B cell (primary cell): ENCODE measurements at regions of chr14 and their contacts with region 1.

Region 1: DNA sequence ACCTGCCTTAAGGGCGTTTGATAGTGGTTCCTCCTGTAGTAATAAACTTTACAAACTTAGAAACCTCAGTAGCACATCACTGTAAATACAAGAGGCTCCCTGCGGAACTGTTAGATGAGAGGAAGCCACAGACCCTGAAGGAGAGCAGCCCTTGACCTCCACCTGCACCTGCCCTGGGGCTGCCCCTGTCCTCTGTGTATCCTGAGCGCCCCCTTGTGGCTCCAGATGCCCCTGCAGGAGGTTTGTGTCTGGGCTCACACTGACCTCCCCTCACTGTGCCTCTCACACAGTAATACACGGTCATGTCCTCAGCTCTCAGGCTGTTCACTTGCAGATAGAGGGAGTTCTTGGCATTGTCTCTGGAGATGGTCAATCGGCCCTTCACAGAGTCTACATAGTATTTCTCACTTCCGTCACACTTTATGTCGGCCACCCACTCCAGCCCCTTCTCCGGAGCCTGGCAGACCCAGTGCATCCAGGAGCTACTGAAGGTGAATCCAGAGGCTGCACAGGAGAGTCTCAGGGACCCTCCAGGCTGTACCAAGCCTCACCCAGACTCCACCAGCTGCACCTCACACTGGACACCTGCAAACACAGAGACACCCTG is 1059.8 kb downstream of the TMEM121 start:
- DNase-seq: peak; percentile 80
- ATAC-seq: peak; percentile 98
- H3K4me3 ChIP-seq: no peak overlapping the region
- H3K4me3 Mint-ChIP-seq: no peak overlapping the region
- H3K27ac ChIP-seq: no peak overlapping the region
- H3K27ac Mint-ChIP-seq: peak overlapping the region; percentile 59
- H3K4me1 ChIP-seq: peaks cover 22 to 31% of the 10 kb centered on the region in 2 donors
- H3K4me1 Mint-ChIP-seq: peaks cover 36% of the 10 kb centered on the region
- H3K27me3 ChIP-seq: no peaks in the 10 kb centered on the region
- H3K27me3 Mint-ChIP-seq: peaks cover 3% of the 10 kb centered on the region
- CTCF ChIP-seq: peak; percentile 89

Region 2: GRCh38 chr14:105640936-105641843 is 945.0 kb before region 1 on chr14:
- CTCF ChIA-PET with region 1: no interaction called
- POLR2A ChIA-PET with region 1: interaction called, 11 read pairs
- intact Hi-C with region 1: no loop called
- DNase-seq: no peak
- ATAC-seq: no peak
- H3K4me3 ChIP-seq: no peak overlapping the region
- H3K4me3 Mint-ChIP-seq: no peak overlapping the region
- H3K27ac ChIP-seq: no peak overlapping the region
- H3K27ac Mint-ChIP-seq: peak overlapping the region; percentile 74
- H3K4me1 ChIP-seq: peaks cover 0 to 11% of the 10 kb centered on the region in 2 donors
- H3K4me1 Mint-ChIP-seq: peaks cover 14% of the 10 kb centered on the region
- H3K27me3 ChIP-seq: no peaks in the 10 kb centered on the region
- H3K27me3 Mint-ChIP-seq: no peaks in the 10 kb centered on the region
- CTCF ChIP-seq: no peak

Region 3: GRCh38 chr14:106442857-106443256 is 143.3 kb before region 1 on chr14:
- CTCF ChIA-PET with region 1: no interaction called
- POLR2A ChIA-PET with region 1: no interaction called
- intact Hi-C with region 1: no loop called
- DNase-seq: peak; percentile 50
- ATAC-seq: peak; percentile 85
- H3K4me3 ChIP-seq: no peak overlapping the region
- H3K4me3 Mint-ChIP-seq: no peak overlapping the region
- H3K27ac ChIP-seq: no peak overlapping the region
- H3K27ac Mint-ChIP-seq: peak overlapping the region; percentile 33
- H3K4me1 ChIP-seq: peaks cover 0 to 3% of the 10 kb centered on the region in 2 donors
- H3K4me1 Mint-ChIP-seq: peaks cover 8% of the 10 kb centered on the region
- H3K27me3 ChIP-seq: peaks cover 0 to 5% (median 0%) of the 10 kb centered on the region in 4 experiments
- H3K27me3 Mint-ChIP-seq: peaks cover 33% of the 10 kb centered on the region
- CTCF ChIP-seq: peak; percentile 68

Region 4: DNA sequence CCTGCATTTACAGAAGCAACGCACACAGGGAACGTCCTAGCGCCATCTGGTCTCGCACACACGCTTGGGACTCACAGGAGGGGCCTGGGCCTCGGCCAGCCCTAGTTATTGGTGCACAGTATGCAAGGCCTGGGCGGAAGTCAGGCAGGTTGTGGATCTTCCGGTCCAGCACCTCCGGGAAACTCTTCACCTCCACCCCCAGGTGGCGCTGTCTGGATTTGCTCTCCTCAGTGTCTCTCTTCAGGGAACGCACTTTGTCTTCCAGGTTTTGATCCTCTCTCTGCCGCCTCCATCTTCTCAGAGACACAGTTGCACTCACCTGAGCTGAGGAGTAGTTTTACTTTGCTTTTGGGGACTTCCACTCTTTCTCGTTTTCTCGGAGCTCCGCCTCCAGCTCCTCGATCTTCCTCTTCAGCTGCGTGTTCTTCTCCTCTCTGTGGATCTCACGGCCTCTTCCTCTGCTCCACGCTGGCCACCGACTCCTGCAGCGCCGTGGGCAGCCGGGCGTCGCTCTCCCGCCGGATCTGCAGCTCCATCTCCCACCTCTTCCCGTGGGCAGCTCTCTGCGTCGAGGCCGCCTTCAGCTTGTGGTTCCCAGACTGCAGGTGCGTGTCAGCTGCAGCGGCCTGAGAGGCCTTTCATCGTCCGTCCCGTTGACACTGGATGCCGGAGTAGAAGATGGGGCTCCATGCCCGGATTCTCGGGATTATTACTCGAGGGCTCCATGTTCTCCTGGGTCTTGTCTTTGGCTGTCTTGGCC is 126.0 kb before region 1 on chr14:
- CTCF ChIA-PET with region 1: no interaction called
- POLR2A ChIA-PET with region 1: no interaction called
- intact Hi-C with region 1: loop called (anchors 10 kb)
- DNase-seq: peak; percentile 47
- ATAC-seq: peak; percentile 49
- H3K4me3 ChIP-seq: no peak overlapping the region
- H3K4me3 Mint-ChIP-seq: no peak overlapping the region
- H3K27ac ChIP-seq: no peak overlapping the region
- H3K27ac Mint-ChIP-seq: no peak overlapping the region
- H3K4me1 ChIP-seq: no peaks in the 10 kb centered on the region
- H3K4me1 Mint-ChIP-seq: peaks cover 11% of the 10 kb centered on the region
- H3K27me3 ChIP-seq: no peaks in the 10 kb centered on the region
- H3K27me3 Mint-ChIP-seq: peaks cover 10% of the 10 kb centered on the region
- CTCF ChIP-seq: peak; percentile 77

Region 5: GRCh38 chr14:106538201-106538600 is 48.0 kb before region 1 on chr14:
- CTCF ChIA-PET with region 1: interaction called, 13 read pairs
- POLR2A ChIA-PET with region 1: no interaction called
- intact Hi-C with region 1: no loop called
- DNase-seq: peak; percentile 54
- ATAC-seq: no peak
- H3K4me3 ChIP-seq: peak overlapping the region in 1 of 5 experiments; percentile 30
- H3K4me3 Mint-ChIP-seq: peak overlapping the region; percentile 60
- H3K27ac ChIP-seq: peak overlapping the region; percentile 57 to 85
- H3K27ac Mint-ChIP-seq: peak overlapping the region; percentile 85
- H3K4me1 ChIP-seq: peaks cover 33 to 36% of the 10 kb centered on the region in 2 donors
- H3K4me1 Mint-ChIP-seq: peaks cover 43% of the 10 kb centered on the region
- H3K27me3 ChIP-seq: peaks cover 0 to 5% (median 1%) of the 10 kb centered on the region in 4 experiments
- H3K27me3 Mint-ChIP-seq: peaks cover 10% of the 10 kb centered on the region
- CTCF ChIP-seq: no peak

Region 6: DNA sequence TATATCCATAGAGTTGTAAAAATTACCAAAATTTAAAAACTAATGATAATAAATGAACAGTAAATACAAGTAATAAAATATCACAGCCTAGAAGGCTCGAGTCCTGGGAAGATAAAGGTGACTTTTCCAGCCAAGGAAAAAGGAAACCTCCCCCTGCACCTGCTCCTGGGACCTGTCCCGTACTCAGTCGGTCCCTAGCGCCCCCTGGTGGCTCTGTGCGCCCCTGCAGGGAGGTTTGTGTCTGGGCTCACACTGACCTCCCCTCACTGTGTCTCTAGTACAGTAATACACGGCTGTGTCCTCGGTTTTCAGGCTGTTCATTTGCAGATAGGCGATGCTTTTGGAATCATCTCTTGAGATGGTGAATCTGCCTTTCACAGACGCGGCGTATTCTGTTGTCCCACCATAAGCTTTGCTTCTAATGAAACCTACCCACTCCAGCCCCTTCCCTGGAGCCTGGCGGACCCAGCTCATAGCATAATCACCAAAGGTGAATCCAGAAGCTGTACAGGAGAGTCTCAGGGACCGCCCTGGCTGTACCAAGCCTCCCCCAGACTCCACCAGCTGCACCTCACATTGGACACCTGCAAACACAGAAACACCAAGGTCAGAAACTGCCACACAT is 29.4 kb before region 1 on chr14:
- CTCF ChIA-PET with region 1: interaction called, 23 read pairs
- POLR2A ChIA-PET with region 1: no interaction called
- intact Hi-C with region 1: no loop called
- DNase-seq: peak; percentile 77
- ATAC-seq: peak; percentile 75
- H3K4me3 ChIP-seq: no peak overlapping the region
- H3K4me3 Mint-ChIP-seq: no peak overlapping the region
- H3K27ac ChIP-seq: no peak overlapping the region
- H3K27ac Mint-ChIP-seq: peak overlapping the region; percentile 50
- H3K4me1 ChIP-seq: no peaks in the 10 kb centered on the region
- H3K4me1 Mint-ChIP-seq: peaks cover 2% of the 10 kb centered on the region
- H3K27me3 ChIP-seq: peaks cover 0 to 4% (median 0%) of the 10 kb centered on the region in 4 experiments
- H3K27me3 Mint-ChIP-seq: peaks cover 11% of the 10 kb centered on the region
- CTCF ChIP-seq: peak; percentile 85

Region 7: DNA sequence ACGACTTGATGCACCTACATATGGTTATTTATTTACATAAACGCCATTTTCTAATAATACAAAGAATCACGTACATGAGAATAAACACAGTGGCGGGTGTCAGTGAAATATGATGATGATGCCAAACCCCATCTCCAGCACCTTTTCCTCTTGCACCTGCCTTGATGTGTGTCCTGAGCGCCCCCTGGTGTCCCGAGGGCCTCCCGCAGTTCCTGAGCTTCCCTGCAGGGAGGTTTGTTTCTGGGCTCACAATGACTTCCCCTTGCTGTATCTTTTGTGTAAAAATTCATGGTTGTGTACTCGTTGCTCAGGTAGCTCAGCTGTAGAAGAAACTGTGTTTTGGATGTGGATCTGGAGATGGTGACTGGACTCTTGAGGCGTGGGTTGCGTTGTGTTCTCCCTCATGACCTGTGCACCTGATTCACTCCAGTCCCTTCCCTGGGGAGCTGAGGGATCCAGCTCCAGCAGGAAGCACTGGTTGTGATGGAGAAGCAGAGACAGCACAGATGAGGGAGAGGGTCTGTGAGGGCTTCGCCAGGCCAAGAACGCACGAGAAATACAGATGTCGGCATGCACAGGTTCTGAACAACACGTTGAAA is 22.0 kb before region 1 on chr14:
- CTCF ChIA-PET with region 1: interaction called, 34 read pairs
- POLR2A ChIA-PET with region 1: interaction called, 3 read pairs
- intact Hi-C with region 1: no loop called
- DNase-seq: peak; percentile 82
- ATAC-seq: peak; percentile 73
- H3K4me3 ChIP-seq: no peak overlapping the region
- H3K4me3 Mint-ChIP-seq: no peak overlapping the region
- H3K27ac ChIP-seq: no peak overlapping the region
- H3K27ac Mint-ChIP-seq: peak overlapping the region; percentile 34
- H3K4me1 ChIP-seq: no peaks in the 10 kb centered on the region
- H3K4me1 Mint-ChIP-seq: peaks cover 3% of the 10 kb centered on the region
- H3K27me3 ChIP-seq: peaks cover 0 to under 1% (median 0%) of the 10 kb centered on the region in 4 experiments
- H3K27me3 Mint-ChIP-seq: peaks cover 12% of the 10 kb centered on the region
- CTCF ChIP-seq: peak; percentile 74

Region 8: DNA sequence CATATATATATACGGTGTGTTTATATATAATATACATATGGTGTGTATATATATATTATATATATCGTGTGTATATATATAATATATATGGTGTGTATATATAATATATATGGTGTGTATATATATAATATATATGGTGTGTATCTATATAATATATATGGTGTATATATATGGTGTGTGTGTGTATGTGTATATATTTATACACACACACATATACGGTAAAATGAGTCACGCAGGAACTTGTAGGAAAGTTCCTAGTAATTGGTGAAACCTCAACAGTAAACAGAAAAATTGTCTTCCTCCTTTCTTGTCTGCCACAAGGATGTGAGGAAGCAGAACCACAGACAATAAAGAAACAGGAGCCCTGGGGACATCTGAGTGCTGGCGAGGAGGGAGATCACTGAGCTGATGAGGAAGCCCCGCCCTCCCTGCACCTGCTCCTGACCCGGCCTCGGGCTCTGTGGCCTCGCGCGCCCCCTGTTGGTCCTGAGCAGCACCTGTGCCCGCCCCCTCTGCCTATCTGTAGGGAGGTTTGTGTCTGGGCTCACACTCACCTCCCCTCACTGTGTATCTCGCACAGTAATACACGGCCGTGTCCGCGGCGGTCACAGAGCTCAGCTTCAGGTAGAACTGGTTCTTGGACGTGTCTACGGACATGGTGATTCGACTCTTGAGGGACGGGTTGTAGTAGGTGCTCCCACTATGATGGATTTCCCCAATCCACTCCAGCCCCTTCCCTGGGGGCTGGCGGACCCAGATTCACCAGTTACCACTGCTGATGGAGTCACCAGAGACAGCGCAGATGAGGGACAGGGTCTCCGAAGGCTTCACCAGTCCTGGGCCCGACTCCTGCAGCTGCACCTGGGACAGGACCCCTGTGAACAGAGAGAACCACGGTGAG is 19.6 kb after region 1 on chr14:
- CTCF ChIA-PET with region 1: interaction called, 10 read pairs
- POLR2A ChIA-PET with region 1: no interaction called
- intact Hi-C with region 1: no loop called
- DNase-seq: peak; percentile 90
- ATAC-seq: peak; percentile 99
- H3K4me3 ChIP-seq: no peak overlapping the region
- H3K4me3 Mint-ChIP-seq: no peak overlapping the region
- H3K27ac ChIP-seq: no peak overlapping the region
- H3K27ac Mint-ChIP-seq: no peak overlapping the region
- H3K4me1 ChIP-seq: peaks cover 0 to 9% of the 10 kb centered on the region in 2 donors
- H3K4me1 Mint-ChIP-seq: peaks cover 14% of the 10 kb centered on the region
- H3K27me3 ChIP-seq: peaks cover 0 to 13% (median 8%) of the 10 kb centered on the region in 4 experiments
- H3K27me3 Mint-ChIP-seq: peaks cover 65% of the 10 kb centered on the region
- CTCF ChIP-seq: peak; percentile 76

Region 9: GRCh38 chr14:106657460-106657859 is 71.3 kb after region 1 on chr14:
- CTCF ChIA-PET with region 1: no interaction called
- POLR2A ChIA-PET with region 1: no interaction called
- intact Hi-C with region 1: no loop called
- DNase-seq: peak; percentile 68
- ATAC-seq: peak; percentile 65
- H3K4me3 ChIP-seq: no peak overlapping the region
- H3K4me3 Mint-ChIP-seq: no peak overlapping the region
- H3K27ac ChIP-seq: no peak overlapping the region
- H3K27ac Mint-ChIP-seq: no peak overlapping the region
- H3K4me1 ChIP-seq: peaks cover 3 to 5% of the 10 kb centered on the region in 2 donors
- H3K4me1 Mint-ChIP-seq: peaks cover 15% of the 10 kb centered on the region
- H3K27me3 ChIP-seq: no peaks in the 10 kb centered on the region
- H3K27me3 Mint-ChIP-seq: no peaks in the 10 kb centered on the region
- CTCF ChIP-seq: peak; percentile 64

Region 10: DNA sequence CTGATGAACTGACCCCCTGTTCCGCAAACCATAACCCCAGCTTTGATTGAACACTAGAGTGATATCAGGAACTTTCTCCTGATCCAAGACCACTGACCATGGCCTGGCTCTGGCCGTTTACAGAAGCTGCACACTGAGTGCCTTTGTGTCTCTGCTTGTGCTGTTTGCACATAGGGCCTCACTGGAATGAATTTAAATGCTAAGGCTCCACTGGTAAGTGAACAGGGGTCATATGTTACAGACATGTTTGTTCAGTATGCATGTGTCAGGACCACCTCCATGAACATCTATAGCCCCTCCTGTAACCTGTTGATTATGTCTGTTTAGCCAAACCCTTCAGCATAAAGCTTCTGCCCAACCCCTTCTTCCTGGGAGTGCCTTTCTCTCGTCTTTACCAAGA is 179.9 kb after region 1 on chr14:
- CTCF ChIA-PET with region 1: no interaction called
- POLR2A ChIA-PET with region 1: no interaction called
- intact Hi-C with region 1: no loop called
- DNase-seq: no peak
- ATAC-seq: no peak
- H3K4me3 ChIP-seq: no peak overlapping the region
- H3K4me3 Mint-ChIP-seq: no peak overlapping the region
- H3K27ac ChIP-seq: no peak overlapping the region
- H3K27ac Mint-ChIP-seq: no peak overlapping the region
- H3K4me1 ChIP-seq: peaks cover 23 to 28% of the 10 kb centered on the region in 2 donors
- H3K4me1 Mint-ChIP-seq: peaks cover 26% of the 10 kb centered on the region
- H3K27me3 ChIP-seq: peaks cover 0 to 5% (median 0%) of the 10 kb centered on the region in 4 experiments
- H3K27me3 Mint-ChIP-seq: peaks cover 12% of the 10 kb centered on the region
- CTCF ChIP-seq: no peak